ENCODE measurements at regions of chr6 and their contacts with region 1.

Region 1: GRCh38 chr6:71383901-71384489 is 95.4 kb downstream of the OGFRL1 start:
- DNase-seq: no peak
- H3K4me3 ChIP-seq: no peak overlapping the region
- CTCF ChIP-seq: no peak

Region 2: GRCh38 chr6:71190809-71191208 is 193.2 kb before region 1 on chr6:
- CTCF ChIA-PET with region 1: interaction called, 13 read pairs
- POLR2A ChIA-PET with region 1: no interaction called
- DNase-seq: no peak
- H3K4me3 ChIP-seq: no peak overlapping the region
- CTCF ChIP-seq: no peak

Region 3: GRCh38 chr6:71396410-71396801 is 12.4 kb after region 1 on chr6:
- CTCF ChIA-PET with region 1: interaction called, 12 read pairs
- POLR2A ChIA-PET with region 1: interaction called, 4 read pairs
- DNase-seq: no peak
- H3K4me3 ChIP-seq: no peak overlapping the region
- CTCF ChIP-seq: no peak

Region 4: GRCh38 chr6:71433441-71433840 is 49.4 kb after region 1 on chr6:
- CTCF ChIA-PET with region 1: no interaction called
- POLR2A ChIA-PET with region 1: no interaction called
- DNase-seq: no peak
- H3K4me3 ChIP-seq: no peak overlapping the region
- CTCF ChIP-seq: no peak

Region 5: GRCh38 chr6:71482742-71483141 is 98.7 kb after region 1 on chr6:
- CTCF ChIA-PET with region 1: interaction called, 43 read pairs
- POLR2A ChIA-PET with region 1: no interaction called
- DNase-seq: no peak
- H3K4me3 ChIP-seq: no peak overlapping the region
- CTCF ChIP-seq: no peak

Region 6: GRCh38 chr6:71489747-71490315 is 105.8 kb after region 1 on chr6:
- CTCF ChIA-PET with region 1: interaction called, 43 read pairs
- POLR2A ChIA-PET with region 1: no interaction called
- DNase-seq: peak; percentile 76
- H3K4me3 ChIP-seq: no peak overlapping the region
- CTCF ChIP-seq: no peak

Measured in AG04449 (cell line).